ENCODE measurements at regions of chr6 and their contacts with region 1.

Region 1: DNA sequence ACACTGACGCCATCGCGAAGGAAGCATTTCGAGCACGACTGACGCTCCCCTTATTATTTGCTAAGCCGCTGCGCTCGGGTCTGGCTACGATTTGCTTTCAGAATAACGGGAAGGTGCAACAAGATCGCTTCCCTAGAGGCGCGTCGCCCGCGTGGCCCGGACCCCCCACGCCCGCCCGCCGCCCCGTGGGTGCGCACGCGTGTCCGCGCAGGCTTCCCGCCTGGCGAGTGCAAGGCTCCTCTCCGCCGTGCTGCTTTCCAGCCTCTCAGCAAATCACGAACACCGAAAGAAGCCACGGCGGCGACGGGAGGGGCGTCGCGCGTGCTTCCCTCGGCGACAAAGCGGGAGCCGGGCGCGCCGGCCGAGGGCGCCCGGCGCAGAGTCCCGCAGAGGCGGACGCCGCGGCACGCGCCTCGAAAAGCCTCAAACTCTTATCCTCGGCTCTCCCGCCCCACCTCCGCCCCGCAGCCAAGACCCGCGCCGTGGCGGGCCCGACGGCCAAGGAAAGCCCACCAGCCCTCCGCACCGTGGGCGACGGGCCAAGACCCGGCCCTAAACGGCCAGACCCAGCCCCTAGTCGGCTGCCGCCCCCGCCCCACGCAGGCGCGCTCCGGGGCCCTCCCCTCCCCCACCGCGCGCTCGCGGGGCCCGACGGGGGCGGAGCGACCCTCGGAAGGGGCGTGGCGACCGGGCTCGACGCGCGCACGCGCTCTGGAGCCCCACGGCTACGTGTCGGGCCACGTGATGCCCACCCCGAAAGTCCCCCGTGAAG is 987 bp upstream of the QKI start:
- DNase-seq: peak; percentile 90 to 95 (median 93)
- ATAC-seq: peak; percentile 71 to 93 (median 90)
- H3K4me3 ChIP-seq: peak overlapping the region; percentile 69 to 93 (median 78)
- H3K27ac ChIP-seq: peak overlapping the region; percentile 95 to 100 (median 99)
- H3K4me1 ChIP-seq: peaks cover 0 to 26% (median 6%) of the 10 kb centered on the region in 12 donors
- H3K27me3 ChIP-seq: no peaks in the 10 kb centered on the region
- CTCF ChIP-seq: no peak
- POLR2A ChIP-seq: peak in 1 of 2 donors; percentile 83

Region 2: GRCh38 chr6:162856885-162857284 is 556.6 kb before region 1 on chr6:
- intact Hi-C with region 1: loop called in 3 of 10 experiments (anchors 10 kb)
- DNase-seq: peak in 1 of 5 donors; percentile 40
- ATAC-seq: peak; percentile 74 to 92 (median 88)
- H3K4me3 ChIP-seq: peak overlapping the region in 9 of 12 donors; percentile 10 to 50 (median 35)
- H3K27ac ChIP-seq: peak overlapping the region in 11 of 12 donors; percentile 10 to 75 (median 56)
- H3K4me1 ChIP-seq: peaks cover 0 to 10% (median 0%) of the 10 kb centered on the region in 12 donors
- H3K27me3 ChIP-seq: no peaks in the 10 kb centered on the region
- CTCF ChIP-seq: peak; percentile 33 to 74 (median 56)
- POLR2A ChIP-seq: no peak

Region 3: DNA sequence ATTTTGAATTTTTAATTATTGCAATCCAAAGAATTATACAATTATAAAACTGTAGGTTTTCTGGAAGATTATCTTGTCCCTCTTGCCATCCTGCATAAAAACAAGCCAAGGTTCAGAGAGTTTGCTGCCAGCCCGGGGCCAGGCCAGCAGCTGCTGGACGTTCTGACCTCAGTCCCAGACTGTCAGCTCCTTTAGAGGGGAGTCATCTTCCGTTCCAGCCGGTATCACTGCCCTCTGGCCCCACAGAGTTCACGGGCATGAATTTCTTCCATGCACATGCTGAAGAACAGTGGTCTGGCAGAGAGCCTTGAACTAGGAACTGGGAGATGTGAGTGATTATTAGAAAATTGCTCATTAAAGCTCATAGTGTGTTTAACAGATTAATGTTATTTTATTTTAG is 129.4 kb before region 1 on chr6:
- intact Hi-C with region 1: loop called in 1 of 10 experiments (anchors 10 kb)
- DNase-seq: no peak
- ATAC-seq: no peak
- H3K4me3 ChIP-seq: no peak overlapping the region
- H3K27ac ChIP-seq: no peak overlapping the region
- H3K4me1 ChIP-seq: peaks cover 0 to 11% (median 0%) of the 10 kb centered on the region in 12 donors
- H3K27me3 ChIP-seq: no peaks in the 10 kb centered on the region
- CTCF ChIP-seq: no peak
- POLR2A ChIP-seq: no peak

Region 4: DNA sequence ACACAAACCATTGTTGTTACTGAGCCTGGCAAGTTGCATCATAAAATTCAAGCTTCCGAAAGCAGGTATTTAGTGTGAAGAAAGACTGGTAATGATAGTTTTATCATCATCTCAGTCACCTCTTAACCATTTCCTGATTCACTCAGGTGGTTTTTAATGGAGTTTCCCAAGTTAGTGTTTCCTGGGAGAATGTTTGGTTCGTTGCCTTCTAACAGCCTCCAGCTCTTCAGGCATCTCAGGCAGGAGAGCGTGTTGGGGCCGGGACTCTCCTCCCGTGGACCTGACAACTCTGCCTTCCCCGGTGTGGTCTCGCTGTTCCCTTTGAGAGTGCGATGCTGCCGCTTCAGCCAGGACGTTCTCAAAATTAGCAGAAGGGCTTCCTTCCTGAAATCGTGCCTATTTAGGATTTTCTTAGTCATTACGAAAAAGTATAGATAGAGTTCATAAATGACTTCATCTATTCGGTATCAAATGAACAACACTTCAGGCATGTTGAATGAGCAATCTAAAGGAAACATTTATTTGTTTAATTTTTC is 104.0 kb before region 1 on chr6:
- intact Hi-C with region 1: no loop called
- DNase-seq: no peak
- ATAC-seq: no peak
- H3K4me3 ChIP-seq: no peak overlapping the region
- H3K27ac ChIP-seq: no peak overlapping the region
- H3K4me1 ChIP-seq: peaks cover 0 to 9% (median 0%) of the 10 kb centered on the region in 12 donors
- H3K27me3 ChIP-seq: no peaks in the 10 kb centered on the region
- CTCF ChIP-seq: no peak
- POLR2A ChIP-seq: no peak

Region 5: DNA sequence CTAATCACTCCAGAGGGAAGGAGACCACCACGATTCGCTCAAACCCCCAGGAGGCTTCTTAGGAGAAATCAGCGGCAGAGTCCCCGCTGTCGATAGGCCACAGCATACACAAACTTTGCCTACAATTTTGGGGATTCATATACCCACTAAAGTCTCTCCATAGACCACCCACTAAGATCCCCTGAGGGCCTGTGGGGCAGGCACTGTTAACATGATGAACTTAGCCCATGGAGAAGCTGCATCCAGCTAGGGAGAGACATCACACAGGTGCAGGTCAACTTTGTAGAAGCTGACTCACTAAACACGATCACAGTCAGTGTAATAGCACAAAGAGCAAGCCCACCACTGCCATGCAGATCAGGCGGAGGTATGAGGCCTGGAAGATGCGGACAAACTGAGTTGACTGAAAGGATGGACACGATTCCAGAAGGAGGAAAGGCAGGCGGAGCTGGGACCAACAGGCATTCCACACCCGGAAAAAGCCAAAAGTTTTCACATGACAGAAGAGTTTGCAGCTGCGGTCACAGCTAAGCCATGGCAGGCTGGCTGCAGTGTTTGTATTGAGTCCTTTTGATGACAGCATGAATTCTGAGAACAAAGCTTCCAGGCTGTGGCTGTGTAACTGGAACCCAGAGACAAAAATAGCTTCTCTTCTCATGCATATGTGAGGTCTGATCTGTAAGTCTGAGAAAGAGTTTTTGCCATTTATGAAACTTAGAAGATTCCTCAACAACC is 74.7 kb before region 1 on chr6:
- intact Hi-C with region 1: loop called in 9 of 10 experiments (anchors 2 to 5 kb)
- DNase-seq: peak; percentile 66 to 74 (median 70)
- ATAC-seq: peak; percentile 62 to 73 (median 68)
- H3K4me3 ChIP-seq: no peak overlapping the region
- H3K27ac ChIP-seq: peak overlapping the region; percentile 71 to 97 (median 90)
- H3K4me1 ChIP-seq: peaks cover 10 to 74% (median 59%) of the 10 kb centered on the region in 12 donors
- H3K27me3 ChIP-seq: no peaks in the 10 kb centered on the region
- CTCF ChIP-seq: no peak
- POLR2A ChIP-seq: no peak

Region 6: DNA sequence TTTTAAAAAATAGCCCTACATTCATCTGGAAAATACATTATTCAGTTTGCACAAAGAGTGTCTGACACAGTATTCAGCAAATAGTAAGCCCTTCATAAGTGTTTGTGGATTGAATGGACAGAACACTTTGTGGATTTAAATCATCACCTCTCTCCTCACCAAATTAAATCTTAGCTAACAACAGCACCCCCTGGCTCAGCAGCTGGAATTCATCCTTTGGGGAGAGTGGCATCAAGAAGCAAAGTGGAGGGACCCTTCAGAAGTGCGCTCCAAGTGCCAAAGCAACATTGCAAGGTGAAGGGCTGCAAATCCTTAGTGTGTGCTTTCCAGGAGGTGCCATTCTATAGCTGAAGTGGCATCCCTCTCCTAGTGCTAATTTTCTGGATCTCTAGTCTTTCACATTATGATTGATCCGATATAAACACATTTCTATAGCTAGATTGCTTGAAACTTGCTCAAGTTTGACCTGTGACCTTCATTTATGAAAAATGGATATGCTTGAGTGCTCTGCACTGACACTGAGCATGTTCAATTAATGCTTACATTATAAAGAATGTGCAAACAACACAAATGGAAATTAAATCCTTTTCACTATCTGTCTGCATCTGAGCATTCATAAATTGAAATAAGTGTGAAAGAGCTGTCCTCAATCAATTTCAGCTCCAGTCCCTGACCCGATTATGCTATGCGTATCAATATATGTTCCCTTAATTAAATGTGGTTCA is 1004.2 kb after region 1 on chr6:
- intact Hi-C with region 1: loop called in 1 of 10 experiments (anchors 10 kb)
- DNase-seq: no peak
- ATAC-seq: no peak
- H3K4me3 ChIP-seq: no peak overlapping the region
- H3K27ac ChIP-seq: no peak overlapping the region
- H3K4me1 ChIP-seq: peaks cover 0 to 25% (median 5%) of the 10 kb centered on the region in 12 donors
- H3K27me3 ChIP-seq: no peaks in the 10 kb centered on the region
- CTCF ChIP-seq: peak in 4 of 12 donors; percentile 11 to 20 (median 14)
- POLR2A ChIP-seq: no peak